A673 (cell line): ENCODE measurements at regions of chr11 and their contacts with region 1.

Region 1: DNA sequence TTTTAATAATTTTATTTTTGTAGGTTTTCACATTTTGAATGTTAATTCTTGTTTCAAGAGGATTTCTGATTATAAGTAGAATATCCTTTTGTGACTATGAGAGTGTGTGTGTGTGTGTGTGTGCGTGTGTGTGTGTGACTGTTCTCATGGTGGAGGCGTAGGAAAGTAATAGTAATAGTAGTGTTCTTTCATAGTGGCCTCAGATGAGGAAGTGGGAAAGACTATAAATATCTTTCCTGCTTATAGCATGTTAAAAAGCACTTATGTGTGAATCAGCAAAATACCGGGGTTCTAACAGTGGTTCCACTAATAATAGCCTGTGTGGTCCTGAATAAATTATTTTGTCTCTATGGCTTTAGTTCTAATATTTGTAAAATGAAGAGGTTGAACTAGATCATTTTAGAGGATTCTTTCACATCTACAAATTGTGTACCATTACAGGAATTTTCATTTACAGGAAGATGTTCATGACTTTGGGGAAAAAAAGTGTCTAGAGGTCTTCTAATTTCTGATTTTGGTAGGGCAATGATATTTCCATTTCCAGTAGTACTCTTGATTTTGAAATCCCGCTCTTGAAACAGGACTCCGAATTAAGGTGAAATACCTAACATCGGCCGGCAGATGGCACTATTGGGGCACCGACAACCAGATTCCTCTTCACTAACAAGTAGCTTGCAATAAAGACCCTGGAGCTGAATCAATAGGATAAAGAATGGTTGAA is 29.9 kb upstream of the OR10G7 start:
- DNase-seq: peak; percentile 86
- H3K4me3 ChIP-seq: no peak overlapping the region
- H3K27ac ChIP-seq: no peak overlapping the region
- H3K4me1 ChIP-seq: peaks cover 26% of the 10 kb centered on the region
- H3K27me3 ChIP-seq: no peaks in the 10 kb centered on the region
- CTCF ChIP-seq: peak; percentile 90

Region 2: GRCh38 chr11:123856444-123856843 is 214.6 kb before region 1 on chr11:
- CTCF ChIA-PET with region 1: no interaction called
- POLR2A ChIA-PET with region 1: no interaction called
- intact Hi-C with region 1: no loop called
- DNase-seq: no peak
- H3K4me3 ChIP-seq: no peak overlapping the region
- H3K27ac ChIP-seq: no peak overlapping the region
- H3K4me1 ChIP-seq: no peaks in the 10 kb centered on the region
- H3K27me3 ChIP-seq: no peaks in the 10 kb centered on the region
- CTCF ChIP-seq: no peak

Region 3: DNA sequence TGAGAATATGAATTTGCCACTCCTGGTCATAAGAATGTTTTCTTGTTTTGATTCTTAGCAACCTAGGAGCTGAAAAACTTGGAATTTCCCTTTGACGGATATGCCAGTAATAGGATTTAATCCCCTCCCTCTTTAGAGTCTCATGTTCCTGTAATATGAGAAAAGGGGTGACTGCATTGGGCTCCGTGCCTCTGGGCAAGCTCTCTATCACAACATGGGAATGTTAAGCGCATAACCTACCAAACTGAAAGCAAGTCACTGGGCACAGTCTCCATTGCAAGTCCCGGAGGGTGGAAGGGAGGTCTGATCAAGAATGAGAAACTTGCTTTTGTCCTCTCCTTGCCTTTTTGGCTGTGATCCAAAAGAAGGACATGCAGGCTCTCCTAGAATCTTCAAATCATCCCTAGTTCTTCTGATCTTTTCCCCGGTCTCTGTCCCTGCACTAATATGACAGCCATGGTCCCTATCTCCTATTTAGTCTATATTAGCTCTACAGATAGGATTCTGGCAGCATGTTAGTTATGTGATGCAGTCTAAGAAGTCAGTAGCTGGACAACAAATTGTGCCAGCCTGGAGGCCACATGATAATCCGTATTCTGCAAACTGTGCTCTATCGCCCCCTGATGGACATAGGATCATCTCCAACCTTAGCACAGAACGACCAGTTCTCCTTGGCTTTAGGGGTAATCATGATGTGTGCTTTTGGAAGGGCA is 123.8 kb after region 1 on chr11:
- CTCF ChIA-PET with region 1: interaction called, 38 read pairs
- POLR2A ChIA-PET with region 1: no interaction called
- intact Hi-C with region 1: loop called (anchors 1 kb)
- DNase-seq: peak; percentile 89
- H3K4me3 ChIP-seq: no peak overlapping the region
- H3K27ac ChIP-seq: peak overlapping the region; percentile 31
- H3K4me1 ChIP-seq: peaks cover 15% of the 10 kb centered on the region
- H3K27me3 ChIP-seq: no peaks in the 10 kb centered on the region
- CTCF ChIP-seq: peak; percentile 95

Region 4: DNA sequence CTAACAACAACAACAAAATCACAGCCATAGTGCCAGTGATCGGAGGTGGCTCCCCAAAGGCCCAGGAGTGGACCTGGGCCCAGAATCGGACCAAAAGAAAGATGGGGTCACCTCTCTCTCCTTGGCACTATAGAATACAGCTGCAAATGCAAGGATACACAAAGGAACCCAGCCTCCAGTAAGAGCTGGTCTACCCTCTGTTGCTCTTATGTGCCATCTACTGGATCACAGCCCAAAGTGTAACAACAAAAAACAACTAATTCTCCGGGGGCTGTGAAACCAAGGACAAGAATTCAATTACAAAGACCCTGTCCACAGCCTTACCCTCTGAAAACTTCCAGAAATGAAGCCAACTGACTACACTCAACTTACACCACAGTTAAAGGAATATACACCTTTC is 206.7 kb after region 1 on chr11:
- CTCF ChIA-PET with region 1: interaction called, 9 read pairs
- POLR2A ChIA-PET with region 1: no interaction called
- intact Hi-C with region 1: loop called (anchors 1 kb)
- DNase-seq: peak; percentile 37
- H3K4me3 ChIP-seq: no peak overlapping the region
- H3K27ac ChIP-seq: no peak overlapping the region
- H3K4me1 ChIP-seq: no peaks in the 10 kb centered on the region
- H3K27me3 ChIP-seq: no peaks in the 10 kb centered on the region
- CTCF ChIP-seq: peak; percentile 54

Region 5: DNA sequence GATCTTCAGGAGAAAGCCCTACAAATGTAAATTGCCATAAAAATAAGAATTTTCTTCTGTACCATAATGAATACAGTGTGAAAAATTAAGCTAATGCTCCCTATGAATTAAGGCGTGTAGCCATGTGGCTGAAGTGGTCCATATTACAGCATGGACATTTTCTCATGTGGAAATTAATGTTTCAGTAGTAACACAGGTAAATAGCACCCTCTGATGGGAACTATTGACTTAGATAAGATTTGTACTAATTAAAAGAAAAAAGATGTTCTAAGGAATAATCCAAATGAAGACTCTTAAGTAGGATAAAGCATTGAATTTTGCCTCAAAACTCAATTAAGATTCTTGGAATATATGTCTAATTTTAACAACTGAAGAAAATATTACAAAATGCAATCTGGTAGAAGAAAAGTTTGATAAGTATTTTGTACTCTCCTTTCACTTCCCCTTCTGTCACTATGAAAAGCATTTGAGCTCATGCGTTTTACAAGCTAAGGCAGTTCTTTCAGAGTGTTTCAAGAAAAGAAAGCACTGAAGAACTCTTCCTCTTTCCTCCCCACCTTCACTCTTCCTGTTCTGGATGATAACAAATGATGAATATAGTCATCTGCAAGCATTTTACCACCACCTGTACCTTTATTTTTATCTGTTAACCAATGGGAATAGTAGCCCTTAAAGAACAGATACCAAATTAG is 258.9 kb after region 1 on chr11:
- CTCF ChIA-PET with region 1: interaction called, 3 read pairs
- POLR2A ChIA-PET with region 1: no interaction called
- intact Hi-C with region 1: loop called (anchors 5 kb)
- DNase-seq: peak; percentile 26
- H3K4me3 ChIP-seq: no peak overlapping the region
- H3K27ac ChIP-seq: no peak overlapping the region
- H3K4me1 ChIP-seq: no peaks in the 10 kb centered on the region
- H3K27me3 ChIP-seq: no peaks in the 10 kb centered on the region
- CTCF ChIP-seq: peak; percentile 18; the same call in 1 of the 2 replicates

Region 6: GRCh38 chr11:124402326-124402922 is 331.3 kb after region 1 on chr11:
- CTCF ChIA-PET with region 1: no interaction called
- POLR2A ChIA-PET with region 1: no interaction called
- intact Hi-C with region 1: loop called (anchors 5 kb)
- DNase-seq: peak; percentile 89
- H3K4me3 ChIP-seq: no peak overlapping the region
- H3K27ac ChIP-seq: no peak overlapping the region
- H3K4me1 ChIP-seq: peaks cover 21% of the 10 kb centered on the region
- H3K27me3 ChIP-seq: no peaks in the 10 kb centered on the region
- CTCF ChIP-seq: peak; percentile 97

Region 7: GRCh38 chr11:124586238-124586860 is 515.3 kb after region 1 on chr11:
- CTCF ChIA-PET with region 1: no interaction called
- POLR2A ChIA-PET with region 1: no interaction called
- intact Hi-C with region 1: loop called (anchors 2 kb)
- DNase-seq: peak; percentile 81
- H3K4me3 ChIP-seq: no peak overlapping the region
- H3K27ac ChIP-seq: no peak overlapping the region
- H3K4me1 ChIP-seq: no peaks in the 10 kb centered on the region
- H3K27me3 ChIP-seq: no peaks in the 10 kb centered on the region
- CTCF ChIP-seq: peak; percentile 75